ENCODE measurements at regions of chr16 and their contacts with region 1.

Region 1: GRCh38 chr16:89167425-89167941 is 4.1 kb upstream of the CDH15 start:
- DNase-seq: peak; percentile 34
- H3K4me3 ChIP-seq: no peak overlapping the region
- H3K27ac ChIP-seq: no peak overlapping the region
- H3K27me3 ChIP-seq: peaks cover 55% of the 10 kb centered on the region
- CTCF ChIP-seq: peak; percentile 87

Region 2: DNA sequence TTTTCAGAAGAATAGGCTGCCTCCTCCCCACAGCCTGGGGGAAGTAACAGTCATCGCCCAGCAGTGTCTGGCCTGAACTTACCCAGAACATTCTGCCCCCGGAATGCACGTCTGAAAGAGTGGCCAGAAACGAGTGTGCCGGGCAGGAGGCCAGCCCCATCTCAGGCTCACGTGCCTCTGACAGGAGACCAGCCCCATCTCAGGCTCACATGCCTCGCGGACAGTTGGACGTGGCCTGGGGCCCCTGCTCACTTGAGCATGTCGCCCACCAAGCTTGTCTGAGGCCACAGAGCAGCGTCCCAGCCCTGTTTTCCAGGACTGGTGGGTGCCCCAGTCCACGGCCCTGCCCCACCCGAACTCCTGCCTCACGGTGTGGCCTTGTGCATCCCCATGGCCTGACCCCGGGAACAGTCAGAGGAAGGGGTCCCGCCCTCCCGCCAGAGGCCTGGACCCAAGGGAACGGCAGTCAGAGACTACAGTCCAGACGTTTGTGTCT is 12.3 kb before region 1 on chr16:
- CTCF ChIA-PET with region 1: interaction called, 13 read pairs
- POLR2A ChIA-PET with region 1: no interaction called
- DNase-seq: peak; percentile 47
- H3K4me3 ChIP-seq: no peak overlapping the region
- H3K27ac ChIP-seq: peak overlapping the region; percentile 68
- H3K27me3 ChIP-seq: no peaks in the 10 kb centered on the region
- CTCF ChIP-seq: no peak

Region 3: GRCh38 chr16:89230255-89230654 is 62.8 kb after region 1 on chr16:
- CTCF ChIA-PET with region 1: no interaction called
- POLR2A ChIA-PET with region 1: no interaction called
- DNase-seq: no peak
- H3K4me3 ChIP-seq: no peak overlapping the region
- H3K27ac ChIP-seq: no peak overlapping the region
- H3K27me3 ChIP-seq: no peaks in the 10 kb centered on the region
- CTCF ChIP-seq: no peak

Measured in AG04450 (cell line).